SK-N-SH (cell line): ENCODE measurements at regions of chr11 and their contacts with region 1.

Region 1: DNA sequence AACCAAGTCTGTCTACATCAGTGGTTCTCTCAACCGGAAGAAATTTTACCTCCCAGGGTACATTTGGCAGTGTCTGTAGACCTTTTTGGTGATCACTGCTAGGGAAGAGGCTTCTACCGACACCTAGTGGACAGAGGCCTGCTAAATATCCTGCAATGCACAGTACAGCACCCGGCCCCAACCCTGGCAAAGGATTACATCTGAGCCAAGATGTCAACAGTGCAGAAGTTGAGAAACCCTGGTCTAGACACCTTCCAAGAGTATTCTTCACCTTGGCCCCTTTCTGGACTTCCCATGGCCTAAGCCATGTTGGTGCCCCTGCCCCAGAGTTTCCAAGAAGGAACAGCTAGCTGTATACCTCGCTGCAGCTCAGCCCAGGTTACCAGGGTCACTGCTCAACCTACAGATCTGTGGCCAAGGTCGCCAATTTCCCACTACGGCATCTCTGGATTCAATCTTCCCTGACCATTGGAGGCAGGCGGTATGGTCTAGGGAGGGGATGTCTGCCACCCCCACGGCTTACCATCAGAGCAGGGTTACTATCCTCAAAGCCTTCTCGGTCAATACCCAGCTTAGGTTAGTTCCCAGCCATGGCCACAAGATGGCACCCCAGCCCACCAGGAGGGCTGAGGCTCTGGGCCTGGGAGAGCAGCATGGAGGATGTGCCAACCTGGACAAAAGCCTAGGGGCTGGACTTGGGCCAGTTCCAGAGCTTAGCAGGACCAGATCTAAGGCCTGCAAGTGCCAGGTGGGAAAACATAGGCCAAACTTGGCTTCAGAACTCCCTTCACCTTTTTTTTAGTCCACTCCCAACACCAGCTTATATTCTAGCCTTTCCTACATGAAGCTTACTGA is 3.7 kb upstream of the KCNC1 start:
- DNase-seq: peak; percentile 89
- H3K4me3 ChIP-seq: no peak overlapping the region; a peak in 1 of 4 replicates
- H3K27ac ChIP-seq: no peak overlapping the region
- H3K4me1 ChIP-seq: peaks cover 0 to 13% of the 10 kb centered on the region in 2 experiments; a peak in 1 of 4 replicates
- H3K27me3 ChIP-seq: no peaks in the 10 kb centered on the region; the same call in 1 of the 2 replicates
- CTCF ChIP-seq: peak; percentile 77
- EP300 ChIP-seq: peak in 1 of 2 experiments; percentile 10; a peak in 1 of 4 replicates
- RAD21 ChIP-seq: peak; percentile 98

Region 2: DNA sequence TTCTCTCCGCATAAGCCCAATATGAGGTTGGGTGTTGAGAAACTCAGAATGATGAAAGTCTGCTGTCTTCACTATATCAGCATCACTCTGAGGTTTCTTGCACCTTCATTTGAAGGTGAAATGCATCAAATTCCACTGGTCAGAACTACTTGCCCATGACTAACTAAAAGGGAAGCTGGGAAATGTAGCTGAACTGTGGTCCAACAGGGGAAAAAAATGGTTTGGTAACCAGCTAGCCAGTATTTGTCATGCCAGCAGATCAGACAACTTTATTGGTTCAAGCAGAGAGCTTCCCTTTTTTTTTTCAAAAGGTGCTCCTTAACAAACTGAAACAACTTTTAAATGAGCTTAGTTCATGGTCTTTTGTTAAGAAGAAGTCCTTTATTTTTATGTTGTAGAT is 508.9 kb before region 1 on chr11:
- CTCF ChIA-PET with region 1: no interaction called
- POLR2A ChIA-PET with region 1: no interaction called
- DNase-seq: no peak
- H3K4me3 ChIP-seq: no peak overlapping the region
- H3K27ac ChIP-seq: no peak overlapping the region
- H3K4me1 ChIP-seq: no peaks in the 10 kb centered on the region
- H3K27me3 ChIP-seq: no peaks in the 10 kb centered on the region
- CTCF ChIP-seq: no peak
- EP300 ChIP-seq: no peak
- RAD21 ChIP-seq: no peak

Region 3: GRCh38 chr11:17650127-17650911 is 80.5 kb before region 1 on chr11:
- CTCF ChIA-PET with region 1: interaction called, 11 read pairs
- POLR2A ChIA-PET with region 1: no interaction called
- DNase-seq: no peak
- H3K4me3 ChIP-seq: no peak overlapping the region
- H3K27ac ChIP-seq: no peak overlapping the region
- H3K4me1 ChIP-seq: no peaks in the 10 kb centered on the region
- H3K27me3 ChIP-seq: no peaks in the 10 kb centered on the region
- CTCF ChIP-seq: no peak
- EP300 ChIP-seq: no peak
- RAD21 ChIP-seq: no peak

Region 4: GRCh38 chr11:17747131-17747955 is 16.5 kb after region 1 on chr11:
- CTCF ChIA-PET with region 1: interaction called, 17 read pairs
- POLR2A ChIA-PET with region 1: interaction called, 4 read pairs
- DNase-seq: no peak
- H3K4me3 ChIP-seq: no peak overlapping the region
- H3K27ac ChIP-seq: no peak overlapping the region
- H3K4me1 ChIP-seq: no peaks in the 10 kb centered on the region
- H3K27me3 ChIP-seq: no peaks in the 10 kb centered on the region
- CTCF ChIP-seq: no peak
- EP300 ChIP-seq: no peak
- RAD21 ChIP-seq: no peak

Region 5: DNA sequence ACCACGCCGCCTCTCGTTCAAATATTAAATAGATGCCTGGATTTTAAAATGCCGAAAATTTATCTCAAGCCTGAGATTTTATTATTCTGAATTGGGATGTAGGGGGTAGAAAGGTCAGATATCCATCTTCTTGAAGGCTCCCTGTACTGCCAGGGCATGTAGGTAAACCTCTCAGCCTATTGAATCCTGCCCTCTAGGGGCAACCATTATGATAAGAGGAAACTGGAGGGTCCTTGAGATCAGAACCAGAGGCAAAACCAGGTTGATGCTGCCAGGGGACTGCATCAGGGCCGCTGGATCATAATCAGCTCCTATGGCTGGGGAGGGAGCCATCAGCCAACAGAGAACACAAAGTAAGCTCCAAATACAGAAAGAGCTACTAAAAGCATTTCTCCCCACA is 96.2 kb after region 1 on chr11:
- CTCF ChIA-PET with region 1: interaction called, 39 read pairs
- POLR2A ChIA-PET with region 1: no interaction called
- DNase-seq: peak; percentile 33
- H3K4me3 ChIP-seq: no peak overlapping the region
- H3K27ac ChIP-seq: no peak overlapping the region; a peak in 1 of 4 replicates
- H3K4me1 ChIP-seq: peaks cover 3 to 5% of the 10 kb centered on the region in 2 experiments; a peak in 2 of 4 replicates
- H3K27me3 ChIP-seq: no peaks in the 10 kb centered on the region
- CTCF ChIP-seq: peak; percentile 37
- EP300 ChIP-seq: no peak
- RAD21 ChIP-seq: peak; percentile 63

Region 6: GRCh38 chr11:17890325-17890724 is 159.5 kb after region 1 on chr11:
- CTCF ChIA-PET with region 1: interaction called, 13 read pairs
- POLR2A ChIA-PET with region 1: no interaction called
- DNase-seq: no peak
- H3K4me3 ChIP-seq: no peak overlapping the region; a peak in 1 of 4 replicates
- H3K27ac ChIP-seq: no peak overlapping the region
- H3K4me1 ChIP-seq: peaks cover 0 to 13% of the 10 kb centered on the region in 2 experiments; a peak in 2 of 4 replicates
- H3K27me3 ChIP-seq: no peaks in the 10 kb centered on the region
- CTCF ChIP-seq: peak; percentile 12; the same call in 1 of the 2 replicates
- EP300 ChIP-seq: no peak
- RAD21 ChIP-seq: 0 out of 2 replicates have a peak, but pooled peaks have one; percentile 6

Region 7: GRCh38 chr11:17921659-17922415 is 191.0 kb after region 1 on chr11:
- CTCF ChIA-PET with region 1: interaction called, 29 read pairs
- POLR2A ChIA-PET with region 1: no interaction called
- DNase-seq: no peak
- H3K4me3 ChIP-seq: no peak overlapping the region
- H3K27ac ChIP-seq: no peak overlapping the region
- H3K4me1 ChIP-seq: peaks cover 0 to under 1% of the 10 kb centered on the region in 2 experiments; a peak in 1 of 4 replicates
- H3K27me3 ChIP-seq: no peaks in the 10 kb centered on the region
- CTCF ChIP-seq: no peak
- EP300 ChIP-seq: no peak
- RAD21 ChIP-seq: no peak

Region 8: GRCh38 chr11:17991783-17992433 is 261.1 kb after region 1 on chr11:
- CTCF ChIA-PET with region 1: interaction called, 730 read pairs
- POLR2A ChIA-PET with region 1: no interaction called
- DNase-seq: peak; percentile 66
- H3K4me3 ChIP-seq: no peak overlapping the region; a peak in 1 of 4 replicates
- H3K27ac ChIP-seq: no peak overlapping the region
- H3K4me1 ChIP-seq: no peaks in the 10 kb centered on the region
- H3K27me3 ChIP-seq: no peaks in the 10 kb centered on the region
- CTCF ChIP-seq: peak; percentile 93
- EP300 ChIP-seq: no peak
- RAD21 ChIP-seq: peak; percentile 78